ENCODE measurements at regions of chr5 and their contacts with region 1.

Region 1: GRCh38 chr5:180209137-180209581 is at the start of gene RASGEF1C:
- DNase-seq: peak; percentile 68
- H3K4me3 Mint-ChIP-seq: peak within 1 kb of the TSS; percentile 30
- H3K27ac Mint-ChIP-seq: no peak within 1 kb of the TSS
- H3K4me1 Mint-ChIP-seq: peaks cover 5% of the 10 kb centered on the region
- H3K27me3 Mint-ChIP-seq: peaks cover 41% of the 10 kb centered on the region
- total RNA-seq, gene RASGEF1C: not detected

Region 2: GRCh38 chr5:180097163-180097892 is 111.8 kb before region 1 on chr5:
- CTCF ChIA-PET with region 1: no interaction called
- POLR2A ChIA-PET with region 1: no interaction called
- intact Hi-C with region 1: no loop called
- DNase-seq: no peak
- H3K4me3 Mint-ChIP-seq: no peak overlapping the region
- H3K27ac Mint-ChIP-seq: no peak overlapping the region
- H3K4me1 Mint-ChIP-seq: no peaks in the 10 kb centered on the region
- H3K27me3 Mint-ChIP-seq: no peaks in the 10 kb centered on the region

Region 3: DNA sequence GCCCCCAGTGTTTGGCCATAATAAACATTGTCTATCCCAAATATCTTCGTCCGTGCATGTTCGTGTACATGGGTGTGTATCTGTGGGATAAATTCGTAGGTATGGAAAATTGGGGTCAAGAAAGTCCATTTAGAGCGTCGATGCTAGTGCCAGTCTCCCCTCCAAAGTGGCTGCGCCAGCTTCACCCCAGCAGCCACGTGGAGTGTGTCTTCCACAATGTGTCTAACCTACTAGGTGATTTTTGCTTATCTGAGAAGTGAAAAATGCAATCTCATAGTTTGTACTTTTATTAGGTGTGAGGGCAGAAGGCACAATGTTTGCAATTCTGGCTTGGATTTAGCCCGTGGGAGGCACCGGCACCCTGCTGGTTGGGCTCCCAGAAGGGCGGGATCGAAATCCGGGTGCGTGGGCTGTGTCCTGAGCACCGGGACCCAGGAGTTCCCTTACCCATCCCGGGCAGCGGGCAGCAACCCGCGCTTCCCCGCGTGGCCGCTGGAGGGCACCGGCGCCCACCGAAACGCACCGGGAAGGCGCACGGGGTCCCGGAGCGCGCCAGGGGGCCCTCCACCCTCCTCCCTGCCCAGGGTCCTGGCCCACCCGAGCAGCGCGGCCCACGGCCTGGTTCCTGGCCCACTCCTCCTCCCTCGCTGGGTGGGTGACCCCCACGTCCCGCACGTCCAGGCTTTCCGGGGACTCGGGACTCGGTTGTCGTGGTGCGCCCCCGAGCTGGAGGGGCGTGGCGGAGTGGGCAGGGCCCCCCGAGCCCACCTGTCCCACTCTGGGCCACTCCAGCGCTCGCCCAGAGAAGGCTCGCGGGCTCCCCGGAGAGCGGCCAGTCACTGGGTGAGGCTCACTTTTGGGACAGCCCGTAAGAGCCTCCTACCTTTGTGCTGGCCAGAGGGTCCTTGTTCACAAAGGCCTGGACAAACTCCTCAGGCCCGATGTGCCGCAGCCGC is 82.2 kb before region 1 on chr5:
- CTCF ChIA-PET with region 1: interaction called, 8 read pairs
- POLR2A ChIA-PET with region 1: no interaction called
- intact Hi-C with region 1: loop called (anchors 5 kb)
- DNase-seq: peak; percentile 40
- H3K4me3 Mint-ChIP-seq: no peak overlapping the region
- H3K27ac Mint-ChIP-seq: no peak overlapping the region
- H3K4me1 Mint-ChIP-seq: no peaks in the 10 kb centered on the region
- H3K27me3 Mint-ChIP-seq: no peaks in the 10 kb centered on the region

Measured in activated CD4-positive, alpha-beta memory T cell treated with anti-CD3 and anti-CD28 coated beads for 36 hours (primary cell).